Mammary epithelial cell (primary cell): ENCODE measurements at regions of chr15 and their contacts with region 1.

Region 1: DNA sequence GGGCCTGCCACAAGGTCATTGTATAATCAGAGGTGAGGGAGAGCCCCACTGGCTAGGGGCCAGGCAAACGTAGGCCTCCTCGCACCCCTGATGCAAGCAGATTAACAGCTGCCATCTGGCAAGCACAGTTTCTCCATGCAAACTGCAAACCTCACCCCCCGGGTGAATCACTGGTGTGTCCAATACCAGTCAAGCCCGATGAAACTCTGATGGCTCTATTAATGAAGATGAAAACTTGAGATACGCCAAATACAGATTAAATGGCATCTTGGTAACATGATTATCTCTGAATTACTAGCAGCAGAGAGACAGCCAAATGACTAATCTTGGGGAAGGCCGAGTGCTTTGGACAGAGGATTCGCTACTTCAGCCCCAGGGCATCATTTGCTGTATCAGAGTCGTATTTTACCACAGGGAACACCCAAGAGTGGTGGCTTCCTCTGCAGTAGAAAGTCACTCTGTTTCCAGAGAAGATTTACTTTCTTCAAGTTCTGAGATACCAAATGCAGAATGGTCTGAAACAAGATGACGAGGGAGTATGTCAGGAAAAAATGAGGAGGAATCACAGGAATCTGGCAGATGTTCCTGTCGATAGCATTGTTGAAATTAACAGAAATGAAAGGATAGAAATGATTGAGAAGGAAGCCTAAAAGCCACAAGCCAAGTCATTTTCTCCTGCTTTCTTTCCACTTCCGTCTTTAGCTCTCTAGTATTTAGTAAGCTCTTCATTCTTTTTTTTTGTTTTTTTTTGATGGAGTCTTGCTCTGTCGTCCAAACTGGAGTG is 96.2 kb upstream of the NR2F2 start:
- DNase-seq: peak; percentile 78
- H3K4me3 ChIP-seq: no peak overlapping the region
- H3K27ac ChIP-seq: no peak overlapping the region
- H3K4me1 ChIP-seq: peaks cover 36% of the 10 kb centered on the region
- H3K27me3 ChIP-seq: no peaks in the 10 kb centered on the region
- CTCF ChIP-seq: no peak

Region 2: DNA sequence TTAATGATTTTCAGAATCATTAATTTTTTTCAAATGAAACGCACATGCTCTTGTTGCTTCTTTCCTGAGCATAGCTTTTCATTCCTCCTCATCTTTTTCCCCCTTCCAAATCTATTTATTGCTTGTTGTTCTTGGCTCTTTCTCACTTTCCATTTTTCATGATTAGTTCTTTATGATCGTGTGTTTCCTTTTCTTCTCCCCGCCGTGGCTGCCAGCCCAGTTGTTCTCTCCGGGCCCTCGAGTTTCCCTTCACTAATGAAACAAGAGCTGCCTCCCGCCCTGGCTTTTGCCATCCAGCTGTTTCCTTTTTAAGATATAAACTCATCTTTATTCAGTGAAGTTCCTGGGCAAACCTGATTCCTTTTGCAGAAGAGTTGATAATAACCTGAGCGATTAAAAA is 74.0 kb before region 1 on chr15:
- CTCF ChIA-PET with region 1: no interaction called
- dilution Hi-C with region 1: no loop called
- in situ Hi-C with region 1: no loop called
- intact Hi-C with region 1: no loop called
- DNase-seq: no peak
- H3K4me3 ChIP-seq: no peak overlapping the region
- H3K27ac ChIP-seq: no peak overlapping the region
- H3K4me1 ChIP-seq: no peaks in the 10 kb centered on the region
- H3K27me3 ChIP-seq: no peaks in the 10 kb centered on the region
- CTCF ChIP-seq: no peak

Region 3: DNA sequence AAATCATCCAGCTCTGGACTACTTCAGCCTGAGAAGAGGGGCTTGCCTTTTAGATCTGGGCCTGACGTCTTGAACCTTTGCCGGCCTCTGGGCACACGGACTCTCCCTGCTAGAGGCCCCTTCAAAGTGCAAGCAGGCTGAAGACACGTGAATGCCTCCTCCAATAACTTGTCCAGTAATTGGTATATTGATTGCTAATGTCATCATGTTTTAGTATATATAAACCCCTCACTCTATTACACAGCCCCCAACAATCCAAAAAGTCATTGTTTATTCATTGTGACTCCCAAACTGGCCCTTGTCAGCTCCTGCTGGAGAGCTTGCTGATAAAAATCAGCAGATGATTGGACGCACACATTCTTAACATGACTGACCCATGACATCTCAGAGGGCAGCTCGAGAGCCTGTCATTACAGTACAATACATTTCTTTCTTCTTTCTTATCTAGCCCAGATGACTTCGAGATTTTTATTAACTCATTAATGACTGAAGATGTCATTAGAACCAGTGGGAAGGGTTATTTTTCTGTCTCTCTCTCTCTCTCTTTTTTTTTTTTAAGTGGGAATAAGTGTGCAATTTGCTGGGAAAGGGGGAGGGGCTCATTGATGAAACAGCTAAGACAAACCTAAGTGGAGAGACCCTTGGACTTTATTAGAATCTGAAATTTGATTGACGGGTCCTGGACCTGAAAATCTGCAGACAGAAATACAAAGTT is 30.7 kb after region 1 on chr15:
- CTCF ChIA-PET with region 1: no interaction called
- dilution Hi-C with region 1: no loop called
- in situ Hi-C with region 1: no loop called
- intact Hi-C with region 1: loop called (anchors 2 kb)
- DNase-seq: peak; percentile 81
- H3K4me3 ChIP-seq: no peak overlapping the region
- H3K27ac ChIP-seq: peak overlapping the region; percentile 93
- H3K4me1 ChIP-seq: peaks cover 40% of the 10 kb centered on the region
- H3K27me3 ChIP-seq: no peaks in the 10 kb centered on the region
- CTCF ChIP-seq: no peak

Region 4: DNA sequence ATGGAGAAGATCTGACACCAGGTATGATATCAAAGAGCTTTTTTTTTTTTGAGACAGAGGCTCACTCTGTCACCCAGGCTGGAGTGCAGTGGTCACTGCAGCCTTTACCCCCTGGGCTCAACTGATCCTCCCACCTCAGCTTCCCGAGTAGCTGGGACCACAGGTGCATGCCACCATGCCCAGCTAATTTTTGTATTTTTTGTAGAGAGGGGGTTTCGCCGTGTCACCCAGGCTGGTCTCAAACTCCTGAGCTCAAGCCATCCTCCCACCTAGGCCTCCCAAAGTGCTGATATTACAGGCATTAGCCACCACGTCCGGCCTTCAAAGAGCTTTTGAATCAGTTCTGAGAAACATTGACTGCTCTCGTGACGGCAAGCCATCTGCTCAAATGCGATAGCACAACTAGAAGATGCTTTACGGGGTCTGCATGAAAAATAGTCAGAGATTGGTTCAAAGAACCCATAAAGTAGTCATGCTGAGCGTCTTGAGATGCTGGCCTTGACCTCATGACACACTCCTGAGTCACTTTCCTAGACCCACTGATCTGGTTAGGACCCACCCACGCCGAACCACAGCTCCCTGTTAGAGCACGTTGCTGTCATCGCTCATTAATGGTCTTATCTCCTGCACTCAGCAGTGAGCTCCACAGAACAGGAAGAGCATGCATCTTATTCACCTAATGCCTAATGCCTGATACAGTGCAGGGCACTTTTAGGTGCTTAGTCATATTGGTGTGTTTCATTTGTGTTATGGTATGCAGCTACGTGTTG is 39.2 kb after region 1 on chr15:
- CTCF ChIA-PET with region 1: no interaction called
- dilution Hi-C with region 1: no loop called
- in situ Hi-C with region 1: no loop called
- intact Hi-C with region 1: loop called (anchors 2 kb)
- DNase-seq: peak; percentile 100
- H3K4me3 ChIP-seq: no peak overlapping the region
- H3K27ac ChIP-seq: peak overlapping the region; percentile 83
- H3K4me1 ChIP-seq: peaks cover 65% of the 10 kb centered on the region
- H3K27me3 ChIP-seq: no peaks in the 10 kb centered on the region
- CTCF ChIP-seq: no peak

Region 5: DNA sequence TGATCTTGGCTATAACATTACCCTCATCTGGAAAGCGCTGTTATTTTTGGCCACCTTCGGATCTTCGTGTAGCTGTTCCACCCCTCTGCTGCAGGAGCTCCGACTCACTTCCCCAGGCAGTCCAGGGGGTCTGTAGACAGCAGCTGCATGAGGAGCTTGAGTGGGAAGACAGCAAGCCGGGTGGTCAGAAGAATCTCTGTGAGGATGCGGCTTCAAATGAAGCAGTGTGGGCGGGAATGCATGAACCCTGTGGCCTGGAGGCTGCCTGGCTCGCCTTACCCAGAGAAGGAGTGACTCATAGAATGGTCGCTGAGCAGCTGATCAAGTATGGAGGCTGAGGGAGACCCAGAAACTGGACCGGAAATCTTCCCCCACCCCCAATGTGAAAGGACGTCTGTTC is 51.0 kb after region 1 on chr15:
- CTCF ChIA-PET with region 1: no interaction called
- dilution Hi-C with region 1: loop called (anchors 5 kb)
- in situ Hi-C with region 1: no loop called
- intact Hi-C with region 1: no loop called
- DNase-seq: no peak
- H3K4me3 ChIP-seq: no peak overlapping the region
- H3K27ac ChIP-seq: no peak overlapping the region
- H3K4me1 ChIP-seq: peaks cover 11% of the 10 kb centered on the region
- H3K27me3 ChIP-seq: no peaks in the 10 kb centered on the region
- CTCF ChIP-seq: no peak

Region 6: GRCh38 chr15:96703794-96704550 is 469.7 kb after region 1 on chr15:
- CTCF ChIA-PET with region 1: no interaction called
- dilution Hi-C with region 1: no loop called
- in situ Hi-C with region 1: no loop called
- intact Hi-C with region 1: no loop called
- DNase-seq: no peak
- H3K4me3 ChIP-seq: no peak overlapping the region
- H3K27ac ChIP-seq: no peak overlapping the region
- H3K4me1 ChIP-seq: no peaks in the 10 kb centered on the region
- H3K27me3 ChIP-seq: no peaks in the 10 kb centered on the region
- CTCF ChIP-seq: no peak